ENCODE measurements at regions of chr2 and their contacts with region 1.

Region 1: DNA sequence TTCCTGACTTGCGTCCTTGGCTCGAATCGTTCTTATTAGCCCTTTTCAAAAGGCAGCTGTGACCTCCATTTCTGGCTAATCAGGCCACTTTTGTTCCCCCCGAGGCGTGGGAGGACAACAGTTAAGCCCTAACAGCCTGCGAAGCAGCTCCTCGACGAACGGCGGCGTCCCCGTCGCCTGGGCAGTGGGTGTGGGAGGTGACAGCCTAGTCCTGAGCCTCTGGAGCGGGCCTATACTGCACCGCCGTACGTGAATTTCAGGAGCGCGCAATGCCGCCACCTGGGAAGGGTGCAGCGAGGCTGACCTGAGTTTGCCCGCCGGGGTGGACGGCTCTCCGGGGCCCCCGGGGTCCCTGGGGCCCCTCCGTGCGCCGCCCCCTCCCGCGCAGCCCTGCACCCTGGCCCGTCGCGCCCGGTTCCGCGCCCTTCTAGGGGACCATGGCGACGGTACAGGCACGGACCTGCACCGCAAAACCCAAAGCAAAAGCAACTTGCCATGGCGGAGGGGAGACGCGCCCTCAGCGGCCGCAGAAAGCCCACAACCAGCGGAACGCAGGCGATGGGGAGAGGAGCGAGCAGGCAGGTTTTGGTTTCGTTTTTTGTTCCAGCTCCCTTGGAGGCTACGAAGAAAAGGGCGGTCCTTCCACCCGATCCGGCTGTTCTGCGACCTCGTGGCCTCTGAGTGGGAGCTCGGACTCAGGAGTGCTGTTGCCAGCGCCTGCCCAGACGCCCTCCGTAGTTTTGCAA is at the start of gene RBM43:
- DNase-seq: peak; percentile 82
- H3K4me3 ChIP-seq: peak within 1 kb of the TSS; percentile 75
- H3K27ac ChIP-seq: peak within 1 kb of the TSS; percentile 9
- H3K4me1 ChIP-seq: peaks cover 15% of the 10 kb centered on the region
- CTCF ChIP-seq: 0 out of 2 replicates have a peak, but pooled peaks have one; percentile 19
- total RNA-seq, gene RBM43: 0.25 and 0.49 TPM in 2 replicates

Region 2: DNA sequence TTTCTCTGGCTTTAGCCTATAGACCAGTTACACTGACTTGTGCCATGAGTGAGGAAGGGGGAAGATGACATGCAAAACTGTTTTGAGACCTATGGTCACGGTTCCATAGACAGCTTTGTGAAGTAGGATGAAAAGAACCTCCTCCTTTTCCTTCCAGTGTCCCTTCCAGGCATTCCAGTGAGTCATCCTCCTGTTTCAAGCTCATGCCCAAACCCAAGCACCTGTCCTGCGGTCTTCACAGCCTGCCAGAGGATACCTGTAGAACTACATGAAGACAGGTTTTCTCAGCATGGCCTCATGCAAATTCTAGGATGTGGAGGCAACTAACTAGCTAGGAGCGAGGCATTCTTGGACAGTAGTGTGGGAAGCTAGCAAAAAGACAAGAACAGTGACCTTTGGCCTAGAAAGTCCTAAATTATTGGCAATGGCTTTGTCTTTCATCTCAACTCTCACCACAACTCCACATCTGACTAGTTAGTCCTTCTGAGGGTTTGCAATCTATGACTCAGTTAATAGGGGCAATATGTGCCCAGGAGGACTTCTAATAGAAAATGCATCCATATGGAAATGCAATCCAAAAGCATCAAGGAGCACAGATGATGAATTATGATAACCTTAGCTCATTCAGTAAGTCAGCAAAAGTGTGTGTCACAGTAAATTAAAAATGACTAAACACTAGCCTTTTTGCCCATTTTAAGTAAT is 154.4 kb before region 1 on chr2:
- CTCF ChIA-PET with region 1: no interaction called
- POLR2A ChIA-PET with region 1: no interaction called
- intact Hi-C with region 1: no loop called
- DNase-seq: no peak
- H3K4me3 ChIP-seq: no peak overlapping the region
- H3K27ac ChIP-seq: no peak overlapping the region
- H3K4me1 ChIP-seq: no peaks in the 10 kb centered on the region
- CTCF ChIP-seq: no peak

Region 3: GRCh38 chr2:151289369-151290088 is 28.1 kb after region 1 on chr2 and contains the start of gene NMI:
- CTCF ChIA-PET with region 1: no interaction called
- POLR2A ChIA-PET with region 1: interaction called, 3 read pairs
- intact Hi-C with region 1: loop called (anchors 2 kb)
- DNase-seq: peak; percentile 59
- H3K4me3 ChIP-seq: peak within 1 kb of the TSS; percentile 76
- H3K27ac ChIP-seq: peak within 1 kb of the TSS; percentile 79
- H3K4me1 ChIP-seq: peaks cover 19% of the 10 kb centered on the region
- CTCF ChIP-seq: peak; percentile 24
- total RNA-seq, gene NMI: 13.0 and 16.3 TPM in 2 replicates